Transverse colon (tissue), 4 donors: ENCODE measurements at regions of chr4 and their contacts with region 1.

Region 1: DNA sequence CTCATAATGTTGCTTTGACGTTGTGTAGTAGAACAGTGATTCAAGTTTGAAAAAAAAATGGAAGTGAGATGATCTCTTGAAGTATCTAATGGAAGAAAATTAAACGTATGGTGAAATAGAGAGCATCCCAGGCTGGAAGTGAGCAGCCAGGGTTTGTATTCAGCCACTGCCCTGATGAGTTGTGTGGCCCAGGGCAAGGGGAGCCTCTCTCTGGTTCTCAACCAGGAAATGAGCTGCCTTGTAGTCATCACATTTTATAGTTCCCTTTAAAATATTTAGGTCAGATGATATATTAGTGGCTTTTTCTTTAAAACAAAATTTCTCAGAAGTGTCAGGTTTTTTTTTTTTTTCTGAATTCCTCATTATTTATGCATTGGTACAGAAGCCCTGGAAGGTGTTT is 150.3 kb downstream of the GPAT3 start:
- DNase-seq: no peak
- H3K4me3 ChIP-seq: no peak overlapping the region
- H3K27ac ChIP-seq: no peak overlapping the region
- H3K4me1 ChIP-seq: no peaks in the 10 kb centered on the region
- H3K27me3 ChIP-seq: no peaks in the 10 kb centered on the region
- CTCF ChIP-seq: no peak
- EP300 ChIP-seq: no peak
- POLR2A ChIP-seq: no peak

Region 2: GRCh38 chr4:83708500-83709175 is 22.5 kb after region 1 on chr4:
- in situ Hi-C with region 1: no loop called
- intact Hi-C with region 1: no loop called
- DNase-seq: no peak
- H3K4me3 ChIP-seq: no peak overlapping the region
- H3K27ac ChIP-seq: no peak overlapping the region
- H3K4me1 ChIP-seq: no peaks in the 10 kb centered on the region
- H3K27me3 ChIP-seq: no peaks in the 10 kb centered on the region
- CTCF ChIP-seq: no peak
- EP300 ChIP-seq: no peak
- POLR2A ChIP-seq: no peak

Region 3: DNA sequence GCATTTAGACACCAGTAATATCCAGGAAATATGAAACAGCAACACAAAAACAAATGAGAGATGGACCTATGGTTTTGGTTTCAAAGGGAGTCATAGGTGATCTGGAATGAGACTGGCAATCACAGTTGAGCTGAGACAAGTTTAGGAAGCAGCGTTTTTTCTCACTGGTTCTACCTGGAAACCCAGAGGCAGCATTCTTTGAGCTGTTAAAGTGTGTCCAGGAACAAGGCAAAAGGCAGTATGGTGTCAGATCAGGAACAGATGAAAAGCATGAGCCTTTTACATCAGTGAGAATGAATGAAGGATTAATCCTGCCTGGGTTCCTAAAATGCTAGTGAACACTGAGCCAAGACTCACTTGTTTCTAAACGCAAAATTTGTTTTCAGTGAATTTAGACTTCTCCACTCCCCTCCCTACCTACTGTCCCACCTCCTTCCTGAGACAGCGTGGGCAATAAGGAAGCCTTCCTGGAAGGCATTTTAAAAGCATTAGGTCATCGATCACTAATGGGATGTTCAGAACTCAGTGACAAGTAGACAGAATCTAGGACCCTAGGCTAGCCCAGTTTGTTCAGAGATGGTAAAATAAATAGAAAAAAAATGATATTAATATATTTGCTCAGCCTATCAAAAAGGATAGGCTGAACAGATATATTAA is 180.5 kb after region 1 on chr4:
- in situ Hi-C with region 1: no loop called
- intact Hi-C with region 1: loop called (anchors 5 kb)
- DNase-seq: no peak
- H3K4me3 ChIP-seq: no peak overlapping the region
- H3K27ac ChIP-seq: no peak overlapping the region
- H3K4me1 ChIP-seq: no peaks in the 10 kb centered on the region
- H3K27me3 ChIP-seq: no peaks in the 10 kb centered on the region
- CTCF ChIP-seq: no peak
- EP300 ChIP-seq: no peak
- POLR2A ChIP-seq: no peak